Calu3 (cell line): ENCODE measurements at regions of chr6 and their contacts with region 1.

Region 1: GRCh38 chr6:52098634-52099185 is 11.3 kb upstream of the PKHD1 start:
- DNase-seq: no peak
- H3K4me3 Mint-ChIP-seq: no peak overlapping the region
- H3K27ac Mint-ChIP-seq: no peak overlapping the region
- H3K4me1 Mint-ChIP-seq: peaks cover 43% of the 10 kb centered on the region
- H3K27me3 Mint-ChIP-seq: no peaks in the 10 kb centered on the region
- CTCF ChIP-seq: no peak

Region 2: GRCh38 chr6:51934098-51934497 is 164.6 kb before region 1 on chr6:
- CTCF ChIA-PET with region 1: no interaction called
- intact Hi-C with region 1: no loop called
- DNase-seq: peak; percentile 2
- H3K4me3 Mint-ChIP-seq: no peak overlapping the region
- H3K27ac Mint-ChIP-seq: no peak overlapping the region
- H3K4me1 Mint-ChIP-seq: peaks cover 9% of the 10 kb centered on the region
- H3K27me3 Mint-ChIP-seq: no peaks in the 10 kb centered on the region
- CTCF ChIP-seq: no peak

Region 3: GRCh38 chr6:52155791-52156576 is 57.3 kb after region 1 on chr6:
- CTCF ChIA-PET with region 1: no interaction called
- intact Hi-C with region 1: loop called (anchors 2 kb)
- DNase-seq: peak; percentile 52
- H3K4me3 Mint-ChIP-seq: peak overlapping the region; percentile 53
- H3K27ac Mint-ChIP-seq: peak overlapping the region; percentile 94
- H3K4me1 Mint-ChIP-seq: peaks cover 48% of the 10 kb centered on the region
- H3K27me3 Mint-ChIP-seq: no peaks in the 10 kb centered on the region
- CTCF ChIP-seq: no peak

Region 4: GRCh38 chr6:52233975-52234823 is 135.5 kb after region 1 on chr6:
- CTCF ChIA-PET with region 1: interaction called, 4 read pairs
- intact Hi-C with region 1: loop called (anchors 1 kb)
- DNase-seq: peak; percentile 61
- H3K4me3 Mint-ChIP-seq: no peak overlapping the region
- H3K27ac Mint-ChIP-seq: no peak overlapping the region
- H3K4me1 Mint-ChIP-seq: peaks cover 7% of the 10 kb centered on the region
- H3K27me3 Mint-ChIP-seq: peaks cover 49% of the 10 kb centered on the region
- CTCF ChIP-seq: peak; percentile 64